Endothelial cell of umbilical vein (primary cell): ENCODE measurements at regions of chr12 and their contacts with region 1.

Region 1: DNA sequence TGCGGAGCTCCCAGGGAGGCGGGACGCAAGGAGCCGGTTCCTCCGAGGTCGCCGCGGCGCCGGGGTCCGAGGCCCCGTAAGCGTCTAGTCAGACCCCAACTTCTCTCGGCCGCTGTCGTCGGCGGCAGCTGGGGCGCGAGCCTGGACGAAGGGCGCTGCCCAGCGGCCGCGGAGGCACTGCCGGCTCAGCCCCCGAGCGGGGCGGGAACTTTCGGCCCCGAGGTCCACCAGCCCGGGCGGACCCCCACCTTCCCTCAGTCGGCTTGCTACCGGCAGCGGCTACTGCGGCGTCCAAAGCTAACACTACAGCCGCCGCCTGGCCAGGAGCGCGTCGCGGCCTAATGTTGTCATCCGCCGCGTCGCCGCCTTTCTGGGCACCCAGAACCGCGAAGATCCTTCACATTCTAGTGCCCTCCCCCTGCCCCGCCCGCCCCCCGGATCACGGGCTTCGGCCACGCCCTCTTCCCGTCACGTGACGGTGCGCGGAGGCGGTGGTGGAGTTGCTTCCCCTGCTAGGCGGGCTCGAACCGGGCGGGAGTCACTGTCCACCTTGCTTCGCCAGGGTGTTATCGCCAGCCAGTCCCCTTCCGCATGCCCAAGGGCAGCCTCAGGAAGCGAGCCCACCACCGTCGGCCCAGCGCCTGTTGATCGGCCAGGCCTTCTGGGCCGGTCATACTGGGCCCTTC is at the start of gene OSBPL8:
- DNase-seq: peak; percentile 95
- H3K4me3 ChIP-seq: peak within 1 kb of the TSS; percentile 83 to 95 (median 88)
- H3K27ac ChIP-seq: peak within 1 kb of the TSS; percentile 84
- H3K4me1 ChIP-seq: peaks cover 27% of the 10 kb centered on the region
- H3K27me3 ChIP-seq: no peaks in the 10 kb centered on the region
- CTCF ChIP-seq: no peak
- POLR2A ChIP-seq: peak; percentile 91
- total RNA-seq, gene OSBPL8: 47.6 and 53.9 TPM in 2 replicates

Region 2: DNA sequence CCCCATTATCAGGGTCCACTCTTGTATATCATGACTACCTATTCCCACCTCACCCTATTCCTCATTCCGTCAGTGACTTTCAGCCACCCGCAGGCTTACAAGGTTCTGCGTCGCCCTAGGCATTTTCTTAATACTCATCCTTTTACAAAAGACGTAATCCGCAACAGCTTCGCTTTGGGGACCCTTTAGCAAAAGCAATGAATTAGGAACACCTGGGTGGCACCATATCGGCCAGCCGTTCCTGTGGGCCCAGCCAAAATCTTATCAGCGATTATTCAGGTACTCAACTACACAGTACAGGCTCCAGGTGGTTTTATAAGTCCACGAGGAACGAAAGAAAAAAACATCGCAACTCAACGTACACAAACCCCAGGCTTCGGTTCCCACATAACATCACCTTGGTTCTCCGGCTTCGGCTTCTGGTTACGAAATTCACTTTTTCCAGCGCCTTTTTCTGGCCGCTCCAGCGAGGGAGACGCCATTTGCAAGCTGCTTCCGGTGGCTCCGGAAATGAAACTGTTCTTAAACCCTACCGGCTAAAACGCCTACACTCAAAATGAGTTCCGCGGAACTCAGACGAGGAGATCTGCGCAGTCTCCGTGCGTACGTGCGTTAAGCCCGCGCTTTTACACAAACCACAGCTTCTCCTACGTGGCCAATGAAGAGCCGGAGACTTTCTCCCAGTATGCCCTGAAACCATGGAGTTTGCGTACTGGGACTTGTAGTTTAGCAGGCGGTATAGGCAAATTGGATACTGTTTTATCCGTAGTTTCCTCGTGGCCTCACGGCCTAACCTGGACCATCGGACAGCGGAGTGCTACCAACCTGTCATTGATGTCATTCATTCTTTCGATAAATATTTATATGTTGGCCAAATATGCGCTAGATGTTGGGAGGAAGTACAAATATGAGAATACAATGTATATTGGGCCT is 1048.2 kb before region 1 on chr12 and contains the start of gene KRR1:
- CTCF ChIA-PET with region 1: no interaction called
- POLR2A ChIA-PET with region 1: no interaction called
- dilution Hi-C with region 1: no loop called
- intact Hi-C with region 1: loop called (anchors 1 kb)
- DNase-seq: peak; percentile 99
- H3K4me3 ChIP-seq: peak within 1 kb of the TSS; percentile 91 to 98 (median 93)
- H3K27ac ChIP-seq: peak within 1 kb of the TSS; percentile 91
- H3K4me1 ChIP-seq: peaks cover 12% of the 10 kb centered on the region
- H3K27me3 ChIP-seq: no peaks in the 10 kb centered on the region
- CTCF ChIP-seq: no peak
- POLR2A ChIP-seq: peak; percentile 66
- total RNA-seq, gene KRR1: 49.3 and 53.4 TPM in 2 replicates

Region 3: GRCh38 chr12:76519538-76519937 is 40.0 kb before region 1 on chr12:
- CTCF ChIA-PET with region 1: no interaction called
- POLR2A ChIA-PET with region 1: no interaction called
- dilution Hi-C with region 1: no loop called
- intact Hi-C with region 1: loop called (anchors 1 kb)
- DNase-seq: peak; percentile 68
- H3K4me3 ChIP-seq: no peak overlapping the region
- H3K27ac ChIP-seq: peak overlapping the region; percentile 64
- H3K4me1 ChIP-seq: peaks cover 16% of the 10 kb centered on the region
- H3K27me3 ChIP-seq: no peaks in the 10 kb centered on the region
- CTCF ChIP-seq: no peak
- POLR2A ChIP-seq: no peak

Region 4: DNA sequence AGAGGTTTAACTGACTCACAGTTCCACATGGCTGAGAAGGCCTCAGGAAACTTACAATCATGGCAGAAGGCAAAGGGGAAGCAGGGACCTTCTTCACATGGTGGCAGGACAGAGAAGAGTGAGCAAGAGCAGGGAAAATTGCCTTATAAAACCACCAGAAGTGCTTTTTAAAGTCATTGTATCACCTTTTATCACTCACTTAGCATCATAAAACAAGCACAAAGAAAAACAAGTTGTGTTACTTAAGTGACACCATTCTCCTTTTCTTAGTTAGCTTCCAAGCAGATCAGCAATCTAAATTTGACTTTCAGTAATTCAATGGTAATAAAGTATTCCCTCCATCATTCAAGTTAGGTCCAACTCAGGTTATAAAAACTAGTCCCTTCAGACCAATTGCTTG is 28.5 kb before region 1 on chr12:
- CTCF ChIA-PET with region 1: interaction called, 3 read pairs
- POLR2A ChIA-PET with region 1: no interaction called
- dilution Hi-C with region 1: no loop called
- intact Hi-C with region 1: loop called (anchors 1 kb)
- DNase-seq: no peak
- H3K4me3 ChIP-seq: no peak overlapping the region
- H3K27ac ChIP-seq: no peak overlapping the region
- H3K4me1 ChIP-seq: no peaks in the 10 kb centered on the region
- H3K27me3 ChIP-seq: no peaks in the 10 kb centered on the region
- CTCF ChIP-seq: no peak
- POLR2A ChIP-seq: no peak

Region 5: GRCh38 chr12:76586764-76587395 is 27.3 kb after region 1 on chr12:
- CTCF ChIA-PET with region 1: interaction called, 25 read pairs
- POLR2A ChIA-PET with region 1: no interaction called
- dilution Hi-C with region 1: no loop called
- intact Hi-C with region 1: no loop called
- DNase-seq: peak; percentile 49
- H3K4me3 ChIP-seq: no peak overlapping the region
- H3K27ac ChIP-seq: no peak overlapping the region
- H3K4me1 ChIP-seq: peaks cover 3% of the 10 kb centered on the region
- H3K27me3 ChIP-seq: no peaks in the 10 kb centered on the region
- CTCF ChIP-seq: peak; percentile 21 to 47
- POLR2A ChIP-seq: no peak

Region 6: GRCh38 chr12:76623931-76624330 is 64.4 kb after region 1 on chr12:
- CTCF ChIA-PET with region 1: no interaction called
- POLR2A ChIA-PET with region 1: no interaction called
- dilution Hi-C with region 1: no loop called
- intact Hi-C with region 1: no loop called
- DNase-seq: peak; percentile 39
- H3K4me3 ChIP-seq: no peak overlapping the region
- H3K27ac ChIP-seq: no peak overlapping the region
- H3K4me1 ChIP-seq: peaks cover 2% of the 10 kb centered on the region
- H3K27me3 ChIP-seq: peaks cover 0 to 2% of the 10 kb centered on the region in 2 experiments
- CTCF ChIP-seq: no peak
- POLR2A ChIP-seq: no peak

Region 7: GRCh38 chr12:76763743-76764675 is 204.5 kb after region 1 on chr12 and contains the start of gene ZDHHC17:
- CTCF ChIA-PET with region 1: no interaction called
- POLR2A ChIA-PET with region 1: no interaction called
- dilution Hi-C with region 1: no loop called
- intact Hi-C with region 1: loop called (anchors 1 kb)
- DNase-seq: peak; percentile 95
- H3K4me3 ChIP-seq: peak within 1 kb of the TSS; percentile 75 to 88 (median 75)
- H3K27ac ChIP-seq: peak within 1 kb of the TSS; percentile 91
- H3K4me1 ChIP-seq: peaks cover 17% of the 10 kb centered on the region
- H3K27me3 ChIP-seq: no peaks in the 10 kb centered on the region
- CTCF ChIP-seq: no peak
- POLR2A ChIP-seq: peak; percentile 82
- total RNA-seq, gene ZDHHC17: 23.6 and 26.9 TPM in 2 replicates

Region 8: DNA sequence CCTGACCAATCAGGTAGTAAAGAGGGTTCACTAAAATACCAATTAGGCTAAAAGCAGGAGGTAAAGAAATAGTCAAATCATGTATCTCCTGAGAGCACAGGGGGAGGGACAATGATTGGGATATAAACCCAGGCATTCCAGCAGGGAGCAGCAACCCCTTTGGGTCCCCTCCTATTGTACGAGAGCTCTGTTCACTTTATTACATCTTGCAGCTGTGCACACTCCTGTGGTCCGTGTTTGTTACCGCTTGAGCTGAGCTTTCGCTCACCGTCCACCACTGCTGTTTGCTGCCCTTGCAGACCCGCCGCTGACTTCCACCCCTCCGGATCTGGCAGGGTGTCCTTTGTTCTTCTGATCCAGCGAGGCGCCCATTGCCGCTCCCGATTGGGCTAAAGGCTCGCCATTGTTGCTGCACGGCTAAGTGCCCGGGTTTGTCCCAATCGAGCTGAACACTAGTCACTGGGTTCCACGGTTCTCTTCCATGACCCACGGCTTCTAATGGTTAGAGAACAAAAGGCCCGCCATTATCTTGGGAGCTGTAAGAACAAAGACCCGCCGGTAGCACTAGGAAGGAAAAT is 441.7 kb after region 1 on chr12:
- CTCF ChIA-PET with region 1: no interaction called
- POLR2A ChIA-PET with region 1: no interaction called
- dilution Hi-C with region 1: no loop called
- intact Hi-C with region 1: no loop called
- DNase-seq: no peak
- H3K4me3 ChIP-seq: no peak overlapping the region
- H3K27ac ChIP-seq: no peak overlapping the region
- H3K4me1 ChIP-seq: no peaks in the 10 kb centered on the region
- H3K27me3 ChIP-seq: peaks cover 0 to 30% of the 10 kb centered on the region in 2 experiments
- CTCF ChIP-seq: no peak
- POLR2A ChIP-seq: no peak